ENCODE measurements at regions of chr6 and their contacts with region 1.

Region 1: GRCh38 chr6:129683601-129684322 is 26.2 kb downstream of the ARHGAP18 start:
- DNase-seq: peak; percentile 54 to 70
- H3K4me3 ChIP-seq: no peak overlapping the region
- H3K4me3 Mint-ChIP-seq: peak overlapping the region; percentile 44
- H3K27ac Mint-ChIP-seq: peak overlapping the region; percentile 20
- H3K4me1 ChIP-seq: peaks cover 26% of the 10 kb centered on the region
- H3K4me1 Mint-ChIP-seq: peaks cover 19% of the 10 kb centered on the region
- H3K27me3 ChIP-seq: no peaks in the 10 kb centered on the region
- H3K27me3 Mint-ChIP-seq: no peaks in the 10 kb centered on the region
- CTCF ChIP-seq: no peak

Region 2: DNA sequence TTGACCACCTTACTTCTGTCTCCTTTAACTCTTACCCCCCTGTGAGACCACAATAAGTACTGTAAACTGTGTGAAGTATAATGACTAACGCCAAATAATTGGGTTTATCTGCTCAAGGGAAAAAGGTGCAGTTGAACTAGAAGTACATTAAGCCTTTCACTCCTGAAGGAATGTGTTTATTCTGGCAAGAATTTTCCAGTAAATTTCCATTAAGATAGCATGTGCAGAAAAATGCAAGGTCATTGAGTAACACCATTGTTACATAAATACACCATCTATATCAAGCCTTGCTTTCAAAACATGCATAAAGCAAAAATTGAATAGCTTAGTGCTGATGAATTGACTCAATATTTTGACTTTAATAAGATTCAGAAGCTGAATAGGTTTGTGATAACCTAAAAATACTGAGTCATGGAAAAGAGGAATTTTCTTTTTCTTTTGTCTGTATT is 39.2 kb before region 1 on chr6:
- CTCF ChIA-PET with region 1: no interaction called
- POLR2A ChIA-PET with region 1: no interaction called
- intact Hi-C with region 1: loop called (anchors 2 kb)
- DNase-seq: no peak
- H3K4me3 ChIP-seq: no peak overlapping the region
- H3K4me3 Mint-ChIP-seq: peak overlapping the region; percentile 1
- H3K27ac Mint-ChIP-seq: peak overlapping the region; percentile 63
- H3K4me1 ChIP-seq: peaks cover 43% of the 10 kb centered on the region
- H3K4me1 Mint-ChIP-seq: peaks cover 31% of the 10 kb centered on the region
- H3K27me3 ChIP-seq: no peaks in the 10 kb centered on the region
- H3K27me3 Mint-ChIP-seq: no peaks in the 10 kb centered on the region
- CTCF ChIP-seq: no peak